Dendritic cell treated with granulocyte-macrophage colony-stimulating factor and Interleukin-4, amounts not matched to agents 40 ng/mL and 50 ng/mL, for 4 days (primary cell): ENCODE measurements at regions of chr19 and their contacts with region 1.

Region 1: GRCh38 chr19:57279418-57280066 is 743 bp upstream of the ZNF460 start:
- H3K4me3 Mint-ChIP-seq: no peak overlapping the region
- H3K27ac Mint-ChIP-seq: no peak overlapping the region
- H3K4me1 Mint-ChIP-seq: peaks cover 21% of the 10 kb centered on the region
- H3K27me3 Mint-ChIP-seq: no peaks in the 10 kb centered on the region

Region 2: DNA sequence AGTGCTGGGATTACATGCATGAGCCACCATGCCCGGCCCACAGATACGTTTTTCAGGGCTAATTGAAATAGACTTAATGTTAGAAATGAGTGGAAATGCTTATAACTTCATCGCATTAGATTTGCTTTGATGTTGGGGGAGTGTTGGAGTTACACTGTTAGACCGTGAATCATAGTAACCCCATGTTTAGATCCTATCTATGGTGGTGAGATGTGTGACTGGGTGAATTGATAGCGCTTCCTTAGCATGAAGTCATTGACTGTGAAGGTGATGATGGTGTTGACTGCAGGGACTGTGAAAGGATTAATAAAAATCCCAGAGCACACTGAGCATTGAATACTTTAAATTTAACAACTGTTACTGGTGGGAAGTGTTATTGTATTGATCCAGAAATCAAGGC is 86.5 kb before region 1 on chr19:
- intact Hi-C with region 1: no loop called
- H3K4me3 Mint-ChIP-seq: peak overlapping the region; percentile 88
- H3K27ac Mint-ChIP-seq: no peak overlapping the region
- H3K4me1 Mint-ChIP-seq: peaks cover 36% of the 10 kb centered on the region
- H3K27me3 Mint-ChIP-seq: no peaks in the 10 kb centered on the region

Region 3: DNA sequence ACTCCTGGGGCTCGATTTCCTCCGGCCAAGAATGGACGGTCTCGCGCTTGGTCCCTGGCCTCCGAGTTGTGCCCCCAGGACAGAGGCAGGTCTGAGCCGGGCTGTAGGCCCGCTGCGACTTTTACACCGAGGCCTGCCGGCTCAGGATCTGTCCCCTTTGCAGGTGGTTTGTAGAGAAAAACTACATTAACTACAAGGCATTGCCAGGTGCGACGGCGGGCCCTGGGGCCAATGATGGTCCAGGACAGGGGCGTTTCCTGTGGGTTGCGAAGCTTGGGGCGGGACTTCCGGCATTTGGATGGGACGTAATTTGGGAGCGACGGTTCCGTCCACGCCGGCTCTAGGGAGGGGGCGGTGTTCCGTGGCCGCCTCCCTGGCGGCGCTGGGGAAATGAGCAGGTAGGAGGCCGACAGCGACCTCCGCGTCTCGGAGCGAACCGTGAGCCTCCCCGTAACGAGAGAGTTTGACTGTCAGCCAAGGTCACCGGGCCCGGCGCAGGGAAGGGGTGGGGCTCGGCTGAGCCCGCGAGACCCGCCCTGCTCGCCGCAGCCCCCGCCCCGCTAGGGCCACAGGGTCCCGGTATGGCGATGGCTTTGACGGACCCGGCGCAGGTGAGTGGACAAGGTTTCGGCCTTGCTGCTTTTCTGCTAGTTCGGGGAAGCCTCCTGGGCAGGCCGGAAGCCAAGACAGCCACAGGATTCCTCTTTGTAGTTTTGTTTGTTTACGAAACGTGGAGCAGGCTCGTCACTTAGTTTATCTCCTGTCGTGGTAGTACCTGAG is 39.0 kb before region 1 on chr19 and contains the start of gene ZNF805:
- intact Hi-C with region 1: loop called (anchors 1 kb)
- H3K4me3 Mint-ChIP-seq: peak within 1 kb of the TSS; percentile 92
- H3K27ac Mint-ChIP-seq: peak within 1 kb of the TSS; percentile 96
- H3K4me1 Mint-ChIP-seq: peaks cover 27% of the 10 kb centered on the region
- H3K27me3 Mint-ChIP-seq: no peaks in the 10 kb centered on the region

Region 4: DNA sequence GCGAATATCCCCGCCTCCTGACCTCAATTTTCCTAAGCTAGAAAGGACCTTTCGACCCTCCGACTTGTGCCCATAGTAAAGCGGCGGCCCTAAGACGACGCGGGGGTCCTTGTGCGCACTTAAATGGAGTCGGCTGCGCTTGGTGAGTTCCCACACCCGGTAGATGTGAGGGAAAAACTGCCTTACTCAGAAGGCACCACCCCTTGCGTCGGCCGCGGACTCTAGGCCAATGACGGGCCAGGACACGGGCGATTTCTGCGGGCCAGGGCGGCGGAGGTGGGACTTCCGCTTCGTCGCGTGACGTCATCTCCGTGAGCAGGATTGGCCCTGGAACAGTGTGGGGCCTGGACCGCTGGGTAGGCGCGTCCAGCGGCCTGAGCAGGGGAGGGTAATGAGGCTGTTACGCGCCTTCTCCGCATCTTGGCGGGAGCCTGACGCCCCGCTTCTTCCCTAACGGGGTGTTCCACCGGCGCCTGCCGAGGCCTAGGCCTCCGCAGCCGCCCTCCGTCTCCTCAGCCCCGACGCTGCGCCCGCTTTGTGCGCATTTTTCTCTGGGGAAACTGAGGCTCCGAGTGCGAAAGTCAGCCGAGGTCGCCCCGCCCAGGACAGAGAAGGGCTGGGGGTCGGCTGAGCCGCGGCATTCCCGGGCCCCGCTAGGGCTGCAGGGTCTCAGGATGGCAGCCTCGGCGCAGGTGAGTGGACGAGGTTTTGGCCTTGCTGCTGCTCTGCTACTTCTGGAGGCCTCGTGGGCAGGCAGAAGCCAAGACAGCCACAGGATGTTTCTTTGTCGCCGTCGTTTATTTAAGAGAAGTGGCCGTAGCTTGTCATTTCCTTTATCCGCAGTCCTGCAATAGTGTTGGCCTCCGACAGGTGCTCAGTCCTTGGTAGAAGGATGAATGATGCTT is 40.9 kb after region 1 on chr19 and contains the start of gene ZNF543:
- intact Hi-C with region 1: loop called (anchors 5 kb)
- H3K4me3 Mint-ChIP-seq: peak within 1 kb of the TSS; percentile 81
- H3K27ac Mint-ChIP-seq: peak within 1 kb of the TSS; percentile 95
- H3K4me1 Mint-ChIP-seq: peaks cover 27% of the 10 kb centered on the region
- H3K27me3 Mint-ChIP-seq: peaks cover 33% of the 10 kb centered on the region

Region 5: DNA sequence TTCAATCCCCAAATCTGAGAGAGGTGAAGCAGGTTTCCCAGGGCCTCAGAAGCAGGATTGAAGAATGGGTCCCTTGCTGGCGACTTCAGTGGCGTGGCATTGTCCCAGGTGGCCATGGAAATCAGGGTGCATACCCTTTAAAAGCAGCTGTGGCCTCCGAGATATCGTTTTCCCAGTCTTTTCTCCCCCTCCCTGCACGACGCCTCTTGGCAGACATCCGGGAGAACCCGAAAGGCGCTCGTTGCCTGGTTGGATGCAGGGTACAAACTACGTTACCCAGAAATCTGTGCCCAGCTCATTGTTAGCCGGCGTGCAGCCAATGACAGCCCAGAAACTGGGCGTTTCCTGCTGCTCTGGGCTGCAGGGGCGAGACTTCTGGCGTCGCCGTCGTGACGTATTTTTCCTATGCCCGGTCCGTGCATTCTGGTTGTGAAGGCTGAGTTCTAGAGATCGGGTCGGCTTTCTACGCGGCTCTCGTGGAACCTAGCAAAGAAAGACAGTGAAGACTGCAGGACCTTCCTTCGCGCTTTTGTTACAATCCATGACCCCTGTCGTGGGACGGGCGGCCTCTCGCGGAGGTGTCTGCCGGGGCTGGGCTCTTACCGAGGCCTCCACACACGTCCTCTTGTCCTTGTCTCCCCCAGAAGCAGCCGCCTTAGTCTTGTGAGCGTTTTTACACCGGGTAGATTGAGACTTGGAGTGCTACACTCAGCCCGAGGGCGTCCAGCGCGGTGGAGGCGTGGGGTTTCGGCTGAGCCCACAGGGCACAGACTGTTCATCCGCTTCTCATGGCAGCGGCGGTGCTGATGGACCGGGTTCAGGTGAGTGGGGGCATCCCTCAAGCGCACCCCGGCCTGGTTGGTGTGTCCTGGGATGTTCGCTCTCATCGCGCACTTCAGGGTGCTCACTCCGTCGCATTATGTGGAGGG is 71.6 kb after region 1 on chr19 and contains the start of gene ZNF304:
- intact Hi-C with region 1: loop called (anchors 5 kb)
- H3K4me3 Mint-ChIP-seq: peak within 1 kb of the TSS; percentile 92
- H3K27ac Mint-ChIP-seq: peak within 1 kb of the TSS; percentile 90
- H3K4me1 Mint-ChIP-seq: peaks cover 23% of the 10 kb centered on the region
- H3K27me3 Mint-ChIP-seq: peaks cover 9% of the 10 kb centered on the region

Region 6: DNA sequence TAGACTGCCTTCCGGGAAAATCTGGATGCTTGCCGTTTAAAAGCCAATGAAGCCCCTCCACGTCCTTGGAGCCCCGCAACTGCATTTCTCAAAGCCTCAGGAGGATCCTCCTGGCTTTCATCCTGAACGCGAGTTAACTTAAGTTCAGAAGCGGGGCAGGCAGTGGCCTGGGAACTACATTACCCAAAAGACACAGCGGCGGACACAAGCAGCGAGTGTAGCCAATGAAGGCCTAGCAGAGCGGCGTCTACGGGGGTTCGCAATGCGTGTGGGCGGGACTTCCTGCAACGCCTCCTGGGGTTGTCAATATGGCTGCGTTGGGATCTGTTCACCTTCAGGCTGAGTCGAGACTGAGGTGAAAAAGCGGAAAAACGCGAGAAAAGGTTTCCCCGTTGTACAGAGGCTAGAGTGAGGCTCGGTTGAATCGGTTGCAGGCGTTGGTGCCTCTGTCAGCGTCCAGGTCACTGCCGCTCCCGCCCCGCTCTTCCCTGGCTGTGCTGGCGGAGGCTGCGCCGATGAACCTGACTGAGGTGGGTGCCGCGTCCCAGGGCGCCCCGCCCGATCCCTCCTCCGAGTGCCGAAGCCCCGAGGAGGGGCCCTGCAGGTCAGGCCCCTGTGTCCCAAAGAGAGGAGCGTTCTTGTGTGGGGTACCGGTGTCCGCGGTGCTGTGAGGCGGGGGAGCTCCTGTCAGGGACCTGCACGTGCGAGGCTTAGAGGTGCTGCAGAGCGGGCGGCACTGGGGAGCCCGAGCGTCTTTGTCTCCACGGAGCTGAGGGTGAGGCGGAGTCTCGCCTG is 131.5 kb after region 1 on chr19 and contains the start of gene ZNF17:
- intact Hi-C with region 1: loop called (anchors 5 kb)
- H3K4me3 Mint-ChIP-seq: peak within 1 kb of the TSS; percentile 95
- H3K27ac Mint-ChIP-seq: peak within 1 kb of the TSS; percentile 87
- H3K4me1 Mint-ChIP-seq: peaks cover 11% of the 10 kb centered on the region
- H3K27me3 Mint-ChIP-seq: no peaks in the 10 kb centered on the region